Head of caudate nucleus (tissue), 42 donors: ENCODE measurements at regions of chr5 and their contacts with region 1.

Region 1: DNA sequence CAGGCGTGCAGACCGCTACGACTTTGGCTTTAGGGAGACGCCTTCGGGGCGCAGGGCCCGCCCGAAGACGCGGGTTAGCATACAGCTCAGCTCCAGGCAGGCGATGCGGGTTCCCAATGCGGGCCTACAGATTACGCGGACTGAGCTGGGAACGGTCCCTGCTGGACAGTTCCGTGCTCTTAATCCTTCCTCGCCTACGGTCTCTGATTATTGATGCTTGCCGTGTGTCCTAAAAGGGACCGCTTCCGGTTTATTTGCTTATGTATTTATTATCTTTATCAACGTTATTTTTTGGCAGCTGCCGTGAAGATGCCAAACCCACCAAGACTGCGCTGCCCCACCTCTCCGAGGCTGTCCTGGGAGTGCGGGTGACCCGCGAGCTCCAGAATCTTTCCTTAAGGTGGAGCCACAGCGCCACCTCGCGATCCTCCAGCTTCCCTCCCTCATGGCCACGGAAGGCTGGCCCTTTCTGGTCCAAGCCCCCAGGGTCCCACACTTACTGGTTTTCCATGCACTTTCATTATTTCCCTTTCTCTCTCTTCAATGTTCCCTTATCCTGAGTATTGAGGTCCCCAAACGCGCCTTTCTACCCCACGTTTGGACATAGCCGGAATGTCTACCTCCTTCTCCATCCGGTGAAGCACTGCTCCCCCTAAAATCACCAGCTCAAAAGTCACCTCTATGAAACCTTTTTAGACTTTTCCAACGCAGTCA is 7.0 kb upstream of the EBF1 start:
- DNase-seq: peak; percentile 58 to 90 (median 76)

Region 2: GRCh38 chr5:157575381-157576020 is 1531.2 kb before region 1 on chr5 and contains the start of gene ADAM19:
- intact Hi-C with region 1: no loop called
- DNase-seq: peak in 29 of 42 donors; percentile 23 to 78 (median 44)

Region 3: DNA sequence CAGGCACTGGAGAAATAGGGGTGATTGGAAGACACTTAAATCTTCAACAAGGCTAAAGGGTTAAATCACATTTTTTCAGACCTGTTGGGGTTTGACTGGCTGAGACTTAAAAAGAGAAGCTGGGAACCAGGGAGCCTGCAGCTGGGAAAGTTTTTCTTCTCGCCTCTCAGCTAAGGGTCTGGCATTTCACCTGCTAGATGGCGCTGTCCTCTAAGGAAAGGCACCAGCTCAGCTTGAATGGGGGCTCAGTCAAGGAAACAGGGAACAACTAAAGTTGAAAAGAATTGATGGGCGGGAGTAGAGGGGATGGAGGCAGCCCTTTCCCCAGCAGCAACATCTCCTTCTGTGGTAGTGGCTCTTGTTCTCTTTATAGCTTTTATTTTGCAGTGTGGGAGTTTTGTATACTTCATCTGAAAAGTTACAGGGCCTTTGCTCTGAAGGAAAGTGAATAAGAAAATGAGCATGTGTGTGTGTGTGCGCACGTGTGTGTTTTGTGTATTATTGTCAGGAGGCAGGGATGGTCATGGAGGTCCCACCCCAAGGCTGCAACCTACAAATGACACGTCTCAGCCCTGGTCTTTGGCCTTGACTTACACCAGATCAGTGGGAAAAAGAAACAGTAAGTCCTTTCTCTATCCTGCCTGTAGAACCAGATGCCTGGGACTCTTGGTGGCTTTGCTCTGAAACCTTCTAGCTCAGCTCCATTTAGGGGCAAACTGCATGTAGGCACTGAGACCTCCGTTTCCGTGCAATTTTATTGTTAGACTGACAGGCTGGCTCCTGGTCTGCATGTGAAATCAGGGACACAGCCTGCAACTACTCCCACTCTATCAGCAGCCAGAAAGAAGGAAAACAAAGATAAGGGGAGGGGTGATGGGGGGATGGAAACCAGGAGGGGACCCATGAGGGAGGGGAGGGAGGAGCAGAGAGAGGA is 931.5 kb before region 1 on chr5:
- intact Hi-C with region 1: loop called (anchors 5 kb)
- DNase-seq: peak; percentile 39 to 88 (median 76)

Region 4: GRCh38 chr5:158431369-158432029 is 675.2 kb before region 1 on chr5:
- intact Hi-C with region 1: no loop called
- DNase-seq: no peak

Region 5: DNA sequence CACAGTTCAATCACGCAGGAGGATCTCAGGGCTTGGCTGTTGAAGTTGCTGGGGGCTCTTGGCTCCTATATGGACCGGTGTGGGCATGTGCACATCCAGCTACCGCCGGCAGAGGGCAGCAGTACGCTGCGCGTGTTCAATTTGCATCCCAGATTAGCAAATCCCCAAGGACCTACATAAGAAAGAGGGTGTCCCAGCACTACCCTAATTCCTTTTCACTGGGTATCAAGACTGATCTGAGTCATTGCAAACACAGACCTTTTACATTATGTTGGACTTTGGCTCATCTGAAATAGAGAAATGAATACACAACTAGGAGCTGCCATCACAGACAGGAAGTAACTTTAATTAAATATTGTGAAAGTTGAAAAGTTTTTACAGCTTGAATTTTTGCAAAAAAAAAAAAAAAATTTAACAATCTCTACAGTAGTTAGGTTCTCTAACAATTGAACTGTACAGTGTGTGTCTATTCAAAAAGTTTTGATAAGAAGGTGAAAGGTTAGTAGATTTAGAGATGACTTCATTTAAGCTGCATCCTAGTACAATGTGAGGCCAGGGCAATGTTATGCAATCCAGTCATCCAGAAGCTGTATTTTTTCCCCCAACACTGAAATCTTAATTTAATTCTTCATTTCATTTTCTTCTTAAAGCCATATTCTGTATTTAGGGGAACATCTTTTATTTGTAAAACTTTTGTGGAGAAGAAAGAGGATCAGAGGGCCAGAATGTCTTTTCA is 411.0 kb before region 1 on chr5:
- intact Hi-C with region 1: loop called (anchors 5 kb)
- DNase-seq: peak; percentile 21 to 93 (median 80)